CD4-positive, alpha-beta T cell (primary cell): ENCODE measurements at regions of chr2 and their contacts with region 1.

Region 1: GRCh38 chr2:223837287-223838061 is at the start of gene AP1S3:
- DNase-seq: peak; percentile 43 to 94 (median 58)
- ATAC-seq: peak; percentile 91
- H3K4me3 ChIP-seq: peak within 1 kb of the TSS; percentile 70
- H3K4me3 Mint-ChIP-seq: peak within 1 kb of the TSS; percentile 98
- H3K27ac ChIP-seq: peak within 1 kb of the TSS in 1 of 2 donors; percentile 1
- H3K27ac Mint-ChIP-seq: peak within 1 kb of the TSS; percentile 56
- H3K4me1 ChIP-seq: peaks cover 18% of the 10 kb centered on the region
- H3K4me1 Mint-ChIP-seq: peaks cover 12% of the 10 kb centered on the region
- H3K27me3 ChIP-seq: peaks cover 0 to 3% of the 10 kb centered on the region in 2 experiments
- H3K27me3 Mint-ChIP-seq: peaks cover 4% of the 10 kb centered on the region
- CTCF ChIP-seq: no peak
- total RNA-seq, gene AP1S3: 0.50 to 0.71 TPM

Region 2: GRCh38 chr2:223772363-223772762 is 65.1 kb before region 1 on chr2:
- CTCF ChIA-PET with region 1: no interaction called
- POLR2A ChIA-PET with region 1: no interaction called
- intact Hi-C with region 1: no loop called
- DNase-seq: no peak
- ATAC-seq: no peak
- H3K4me3 ChIP-seq: no peak overlapping the region
- H3K4me3 Mint-ChIP-seq: no peak overlapping the region
- H3K27ac ChIP-seq: no peak overlapping the region
- H3K27ac Mint-ChIP-seq: no peak overlapping the region
- H3K4me1 ChIP-seq: no peaks in the 10 kb centered on the region
- H3K4me1 Mint-ChIP-seq: no peaks in the 10 kb centered on the region
- H3K27me3 ChIP-seq: no peaks in the 10 kb centered on the region
- H3K27me3 Mint-ChIP-seq: no peaks in the 10 kb centered on the region
- CTCF ChIP-seq: no peak

Region 3: DNA sequence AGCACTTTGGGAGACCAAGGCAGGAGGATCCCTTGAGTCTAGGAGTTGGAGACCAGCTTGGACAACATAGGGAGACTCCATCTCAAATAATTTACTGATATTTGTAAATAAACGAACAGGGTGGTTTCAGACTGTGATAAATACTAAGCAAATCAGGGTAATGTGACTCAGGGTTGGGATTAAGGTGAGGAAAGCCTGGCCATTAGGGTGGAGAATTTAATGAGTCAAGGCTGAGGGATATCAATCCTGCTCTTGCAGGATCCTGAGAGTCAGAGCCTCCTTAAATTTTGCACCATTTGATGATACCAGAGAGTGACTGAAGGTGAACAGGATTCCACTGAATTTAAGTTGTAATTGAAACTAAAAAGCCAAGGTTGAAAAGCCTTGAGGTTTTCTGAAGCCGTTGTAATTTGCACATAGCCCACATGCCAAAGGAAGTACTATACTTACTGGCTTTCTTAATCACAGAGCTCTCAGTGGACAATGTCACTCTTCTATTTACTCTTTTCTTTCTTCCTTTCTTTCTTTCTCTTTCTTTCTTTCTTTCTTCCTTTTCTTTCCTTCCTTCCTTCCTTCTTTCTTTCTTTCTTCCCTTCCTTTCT is 28.5 kb after region 1 on chr2:
- CTCF ChIA-PET with region 1: no interaction called
- POLR2A ChIA-PET with region 1: no interaction called
- intact Hi-C with region 1: loop called in 1 of 2 experiments (anchors 1 kb)
- DNase-seq: peak in 1 of 14 experiments; percentile 54
- ATAC-seq: peak; percentile 17
- H3K4me3 ChIP-seq: no peak overlapping the region
- H3K4me3 Mint-ChIP-seq: no peak overlapping the region
- H3K27ac ChIP-seq: no peak overlapping the region
- H3K27ac Mint-ChIP-seq: peak overlapping the region; percentile 7
- H3K4me1 ChIP-seq: peaks cover 19% of the 10 kb centered on the region
- H3K4me1 Mint-ChIP-seq: peaks cover 22% of the 10 kb centered on the region
- H3K27me3 ChIP-seq: no peaks in the 10 kb centered on the region
- H3K27me3 Mint-ChIP-seq: no peaks in the 10 kb centered on the region
- CTCF ChIP-seq: no peak